Mammary epithelial cell (primary cell): ENCODE measurements at regions of chr20 and their contacts with region 1.

Region 1: DNA sequence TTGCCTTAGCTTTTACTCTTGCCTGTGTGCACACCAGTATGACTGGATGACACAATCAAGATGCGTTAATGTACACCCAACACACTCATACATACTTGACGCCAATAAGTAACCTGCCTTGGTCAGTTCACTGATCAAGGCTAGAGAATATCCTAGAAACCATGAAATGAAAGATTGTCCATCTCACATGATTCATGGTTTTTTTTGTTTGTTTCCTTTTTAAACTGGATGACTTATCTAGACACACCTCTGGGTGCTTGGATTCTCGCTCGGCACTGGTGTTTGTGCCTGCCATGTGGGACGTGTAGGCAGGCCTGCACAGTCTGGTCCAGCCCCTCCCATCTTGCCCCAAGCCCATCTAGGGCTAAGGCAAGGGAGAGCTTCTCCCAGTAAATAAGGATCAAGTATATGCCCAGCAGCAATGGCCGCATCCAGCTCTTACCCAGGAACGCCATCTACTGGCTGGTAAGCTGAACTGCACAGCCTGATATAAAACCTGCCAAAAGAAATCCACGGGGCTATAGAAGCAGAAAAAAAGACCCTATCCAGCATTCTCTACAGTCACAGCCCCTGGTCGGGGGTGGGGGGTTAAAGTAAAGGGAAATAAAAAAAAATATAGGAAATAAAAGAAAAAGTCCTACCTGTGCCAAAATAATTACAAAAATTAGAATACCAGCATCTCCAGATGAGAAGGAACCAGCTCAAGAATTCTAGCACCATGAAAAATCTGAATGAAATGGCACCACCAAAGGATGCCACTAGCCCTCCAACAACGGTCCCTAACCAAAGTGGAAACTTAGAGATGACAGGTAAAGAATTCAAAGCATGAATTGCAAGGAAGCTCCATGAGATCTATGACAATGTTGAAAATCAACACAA is 73.3 kb downstream of the OTOR start:
- DNase-seq: peak; percentile 28
- H3K4me3 ChIP-seq: no peak overlapping the region
- H3K27ac ChIP-seq: no peak overlapping the region
- H3K4me1 ChIP-seq: no peaks in the 10 kb centered on the region
- H3K27me3 ChIP-seq: no peaks in the 10 kb centered on the region
- CTCF ChIP-seq: peak; percentile 88 to 93

Region 2: GRCh38 chr20:16580147-16580546 is 241.3 kb before region 1 on chr20:
- CTCF ChIA-PET with region 1: no interaction called
- dilution Hi-C with region 1: no loop called
- in situ Hi-C with region 1: no loop called
- intact Hi-C with region 1: no loop called
- DNase-seq: peak; percentile 76
- H3K4me3 ChIP-seq: no peak overlapping the region
- H3K27ac ChIP-seq: no peak overlapping the region
- H3K4me1 ChIP-seq: peaks cover 18% of the 10 kb centered on the region
- H3K27me3 ChIP-seq: no peaks in the 10 kb centered on the region
- CTCF ChIP-seq: no peak

Region 3: GRCh38 chr20:16864069-16864468 is 42.6 kb after region 1 on chr20:
- CTCF ChIA-PET with region 1: no interaction called
- dilution Hi-C with region 1: no loop called
- in situ Hi-C with region 1: no loop called
- intact Hi-C with region 1: no loop called
- DNase-seq: no peak
- H3K4me3 ChIP-seq: no peak overlapping the region
- H3K27ac ChIP-seq: no peak overlapping the region
- H3K4me1 ChIP-seq: no peaks in the 10 kb centered on the region
- H3K27me3 ChIP-seq: no peaks in the 10 kb centered on the region
- CTCF ChIP-seq: no peak

Region 4: GRCh38 chr20:17044901-17045300 is 223.5 kb after region 1 on chr20:
- CTCF ChIA-PET with region 1: no interaction called
- dilution Hi-C with region 1: no loop called
- in situ Hi-C with region 1: no loop called
- intact Hi-C with region 1: no loop called
- DNase-seq: no peak
- H3K4me3 ChIP-seq: no peak overlapping the region
- H3K27ac ChIP-seq: no peak overlapping the region
- H3K4me1 ChIP-seq: no peaks in the 10 kb centered on the region
- H3K27me3 ChIP-seq: no peaks in the 10 kb centered on the region
- CTCF ChIP-seq: no peak

Region 5: DNA sequence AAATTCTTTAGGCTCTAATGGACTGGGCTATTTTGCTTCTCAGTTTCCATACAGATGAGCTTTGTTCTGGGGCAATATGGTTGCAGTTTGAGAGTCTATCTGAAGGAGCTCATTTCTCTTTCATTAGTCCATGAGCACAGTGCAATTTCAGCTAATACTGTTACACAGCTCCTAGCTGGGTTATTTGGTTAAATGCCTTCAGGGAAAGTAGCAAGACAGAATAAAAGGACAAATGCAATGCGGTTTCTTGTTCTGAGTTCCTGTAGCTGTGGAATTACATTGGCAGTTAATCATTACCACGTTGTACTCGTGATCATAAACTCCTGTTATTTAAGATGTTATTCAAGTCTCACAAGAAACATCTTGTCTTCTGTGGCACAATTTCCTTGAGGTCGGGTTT is 582.0 kb after region 1 on chr20:
- CTCF ChIA-PET with region 1: no interaction called
- dilution Hi-C with region 1: loop called (anchors 10 kb)
- in situ Hi-C with region 1: no loop called
- intact Hi-C with region 1: no loop called
- DNase-seq: no peak
- H3K4me3 ChIP-seq: no peak overlapping the region
- H3K27ac ChIP-seq: no peak overlapping the region
- H3K4me1 ChIP-seq: no peaks in the 10 kb centered on the region
- H3K27me3 ChIP-seq: peaks cover 2% of the 10 kb centered on the region
- CTCF ChIP-seq: no peak